ENCODE measurements at regions of chr2 and their contacts with region 1.

Region 1: GRCh38 chr2:68302281-68302875 is 17.4 kb downstream of the CNRIP1 start:
- DNase-seq: peak; percentile 44
- H3K4me3 ChIP-seq: no peak overlapping the region
- H3K27ac ChIP-seq: peak overlapping the region in 1 of 2 experiments; percentile 31; a peak in 2 of 4 replicates
- H3K4me1 ChIP-seq: peaks cover 4 to 15% of the 10 kb centered on the region in 2 experiments; a peak in 2 of 4 replicates
- H3K27me3 ChIP-seq: no peaks in the 10 kb centered on the region
- CTCF ChIP-seq: no peak
- EP300 ChIP-seq: no peak
- RAD21 ChIP-seq: no peak

Region 2: GRCh38 chr2:68319398-68320117 is 17.2 kb after region 1 on chr2 and contains the start of gene CNRIP1:
- CTCF ChIA-PET with region 1: interaction called, 13 read pairs
- POLR2A ChIA-PET with region 1: interaction called, 8 read pairs
- DNase-seq: peak; percentile 87
- H3K4me3 ChIP-seq: peak within 1 kb of the TSS; percentile 91 to 94
- H3K27ac ChIP-seq: peak within 1 kb of the TSS; percentile 89 to 97
- H3K4me1 ChIP-seq: peaks cover 7 to 11% of the 10 kb centered on the region in 2 experiments; a peak in 3 of 4 replicates
- H3K27me3 ChIP-seq: no peaks in the 10 kb centered on the region
- CTCF ChIP-seq: no peak
- EP300 ChIP-seq: peak in 1 of 2 experiments; percentile 57; a peak in 1 of 4 replicates
- RAD21 ChIP-seq: no peak
- polyA plus RNA-seq, gene CNRIP1: 55.5 and 63.0 TPM in 2 replicates